GM12878 (cell line): ENCODE measurements at regions of chrX and their contacts with region 1.

Region 1: DNA sequence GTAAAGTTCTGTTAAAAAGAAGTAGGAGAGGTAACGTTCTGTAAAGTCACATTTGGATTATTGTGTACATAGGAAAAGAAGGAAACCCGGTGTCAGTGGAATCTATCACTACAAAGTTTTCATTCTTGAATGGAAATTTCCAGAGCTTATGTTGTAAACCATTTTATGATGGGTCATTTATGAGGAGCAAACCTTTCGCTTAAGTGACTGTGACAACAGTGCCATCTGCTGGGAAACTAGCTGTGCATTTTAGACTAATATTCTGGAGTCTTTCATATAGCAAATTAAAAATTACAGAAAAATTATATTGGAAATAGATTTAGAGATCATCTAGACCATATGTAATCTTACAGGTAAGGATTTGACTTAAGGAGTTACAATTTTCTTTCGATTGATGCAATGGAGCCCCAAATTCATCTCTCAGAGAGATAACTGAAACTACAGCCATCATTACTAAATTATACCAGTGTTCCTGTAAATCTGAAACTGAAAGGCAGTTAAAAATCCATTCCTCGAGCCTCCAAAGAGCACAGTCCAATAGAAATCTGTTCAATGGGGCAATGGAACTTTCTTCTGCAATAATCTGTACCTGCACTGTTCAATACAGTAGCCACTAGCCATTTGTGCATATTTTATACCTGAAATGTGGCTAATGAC is 26.9 kb downstream of the ASB9 start:
- DNase-seq: peak; percentile 17
- ATAC-seq: peak; percentile 85
- H3K4me3 ChIP-seq: no peak overlapping the region
- H3K27ac ChIP-seq: no peak overlapping the region
- H3K4me1 ChIP-seq: no peaks in the 10 kb centered on the region
- H3K27me3 ChIP-seq: no peaks in the 10 kb centered on the region
- CTCF ChIP-seq: peak; percentile 56 to 65 (median 64)
- EP300 ChIP-seq: no peak
- POLR2A ChIP-seq: no peak
- RAD21 ChIP-seq: peak; percentile 85

Region 2: GRCh38 chrX:14039344-14039743 is 1203.7 kb before region 1 on chrX:
- CTCF ChIA-PET with region 1: interaction called, 6 read pairs
- POLR2A ChIA-PET with region 1: no interaction called
- RAD21 ChIA-PET with region 1: interaction called, 3 read pairs
- SMC1A ChIA-PET with region 1: interaction called, 3 read pairs
- in situ Hi-C with region 1: loop called (anchors 10 kb)
- intact Hi-C with region 1: loop called (anchors 2 kb)
- DNase-seq: no peak
- ATAC-seq: peak; percentile 95
- H3K4me3 ChIP-seq: no peak overlapping the region
- H3K27ac ChIP-seq: no peak overlapping the region
- H3K4me1 ChIP-seq: no peaks in the 10 kb centered on the region
- H3K27me3 ChIP-seq: peaks cover 0 to 2% of the 10 kb centered on the region in 2 experiments; a peak in 1 of 4 replicates
- CTCF ChIP-seq: peak; percentile 48 to 81 (median 61); a peak in 5 of 6 replicates
- EP300 ChIP-seq: peak in 1 of 2 experiments; percentile 99; a peak in 2 of 4 replicates
- POLR2A ChIP-seq: no peak
- RAD21 ChIP-seq: peak; percentile 88

Region 3: GRCh38 chrX:14095702-14096101 is 1147.3 kb before region 1 on chrX:
- CTCF ChIA-PET with region 1: interaction called, 4 read pairs
- POLR2A ChIA-PET with region 1: no interaction called
- RAD21 ChIA-PET with region 1: interaction called, 3 read pairs
- SMC1A ChIA-PET with region 1: interaction called, 5 read pairs
- in situ Hi-C with region 1: no loop called
- intact Hi-C with region 1: loop called (anchors 1 kb)
- DNase-seq: peak; percentile 4
- ATAC-seq: peak; percentile 97
- H3K4me3 ChIP-seq: no peak overlapping the region
- H3K27ac ChIP-seq: no peak overlapping the region
- H3K4me1 ChIP-seq: no peaks in the 10 kb centered on the region
- H3K27me3 ChIP-seq: no peaks in the 10 kb centered on the region; a peak in 1 of 4 replicates
- CTCF ChIP-seq: peak; percentile 72 to 80 (median 76)
- EP300 ChIP-seq: no peak
- POLR2A ChIP-seq: no peak
- RAD21 ChIP-seq: peak; percentile 77

Region 4: DNA sequence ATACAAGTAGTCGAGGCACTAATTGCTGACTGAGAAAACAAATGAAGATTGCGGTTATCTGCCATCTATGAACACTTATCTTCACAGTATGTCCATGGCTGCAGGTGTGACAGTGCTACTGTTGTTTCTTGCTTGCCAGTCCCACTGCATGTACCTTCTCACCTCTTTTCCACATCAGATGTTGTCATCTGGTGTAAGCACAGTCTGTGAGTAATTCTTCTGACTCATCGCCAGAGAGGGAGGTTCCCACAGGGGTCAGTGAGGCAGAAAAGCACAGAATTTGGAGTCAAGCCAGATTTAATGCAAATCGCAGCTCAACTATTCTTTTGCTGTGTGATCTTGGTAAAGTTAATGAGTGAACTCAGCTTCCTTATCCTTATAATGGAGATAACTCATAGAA is 569.3 kb before region 1 on chrX:
- CTCF ChIA-PET with region 1: no interaction called
- POLR2A ChIA-PET with region 1: no interaction called
- RAD21 ChIA-PET with region 1: interaction called, 3 read pairs
- SMC1A ChIA-PET with region 1: interaction called, 3 read pairs
- in situ Hi-C with region 1: no loop called
- intact Hi-C with region 1: loop called (anchors 10 kb)
- DNase-seq: peak; percentile 70
- ATAC-seq: peak; percentile 96
- H3K4me3 ChIP-seq: no peak overlapping the region
- H3K27ac ChIP-seq: no peak overlapping the region
- H3K4me1 ChIP-seq: peaks cover 12% of the 10 kb centered on the region
- H3K27me3 ChIP-seq: no peaks in the 10 kb centered on the region
- CTCF ChIP-seq: no peak
- EP300 ChIP-seq: peak; percentile 31 to 46; a peak in 1 of 4 replicates
- POLR2A ChIP-seq: no peak
- RAD21 ChIP-seq: no peak

Region 5: DNA sequence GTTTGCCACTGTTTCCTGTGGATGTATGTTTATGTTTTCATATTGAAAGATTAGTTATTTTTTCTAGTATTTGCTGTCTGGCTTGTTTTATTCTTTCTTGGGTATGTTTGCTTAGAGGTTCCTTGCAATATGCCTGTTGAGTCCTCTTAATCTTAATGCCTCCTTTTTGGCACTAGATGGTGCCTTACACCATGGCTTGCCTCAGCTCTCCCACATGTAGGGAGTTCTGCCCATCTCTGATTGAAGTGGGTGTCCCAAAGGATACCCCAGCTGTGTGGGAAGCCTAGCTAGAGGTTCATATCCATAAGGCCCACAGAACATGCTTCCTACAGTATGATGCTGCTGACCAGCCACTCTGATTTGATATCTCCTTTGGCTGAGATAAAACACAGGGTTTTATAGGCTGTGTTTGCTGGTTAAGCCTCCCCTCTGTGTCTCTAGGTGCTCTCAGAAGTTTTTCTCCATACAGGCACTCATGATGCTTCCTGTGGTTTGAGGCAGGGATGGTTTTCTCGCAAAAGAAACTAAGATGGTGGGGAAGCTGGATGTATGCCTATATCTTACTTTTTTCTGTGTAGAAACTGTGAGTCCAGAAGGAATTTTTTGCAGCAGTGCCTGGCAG is 135.5 kb before region 1 on chrX:
- CTCF ChIA-PET with region 1: interaction called, 12 read pairs
- POLR2A ChIA-PET with region 1: no interaction called
- RAD21 ChIA-PET with region 1: interaction called, 7 read pairs
- SMC1A ChIA-PET with region 1: interaction called, 22 read pairs
- in situ Hi-C with region 1: no loop called
- intact Hi-C with region 1: loop called (anchors 1 kb)
- DNase-seq: no peak
- ATAC-seq: peak; percentile 78
- H3K4me3 ChIP-seq: no peak overlapping the region
- H3K27ac ChIP-seq: no peak overlapping the region
- H3K4me1 ChIP-seq: no peaks in the 10 kb centered on the region
- H3K27me3 ChIP-seq: no peaks in the 10 kb centered on the region
- CTCF ChIP-seq: peak; percentile 23 to 35 (median 30); a peak in 3 of 6 replicates
- EP300 ChIP-seq: no peak
- POLR2A ChIP-seq: no peak
- RAD21 ChIP-seq: peak; percentile 49

Region 6: DNA sequence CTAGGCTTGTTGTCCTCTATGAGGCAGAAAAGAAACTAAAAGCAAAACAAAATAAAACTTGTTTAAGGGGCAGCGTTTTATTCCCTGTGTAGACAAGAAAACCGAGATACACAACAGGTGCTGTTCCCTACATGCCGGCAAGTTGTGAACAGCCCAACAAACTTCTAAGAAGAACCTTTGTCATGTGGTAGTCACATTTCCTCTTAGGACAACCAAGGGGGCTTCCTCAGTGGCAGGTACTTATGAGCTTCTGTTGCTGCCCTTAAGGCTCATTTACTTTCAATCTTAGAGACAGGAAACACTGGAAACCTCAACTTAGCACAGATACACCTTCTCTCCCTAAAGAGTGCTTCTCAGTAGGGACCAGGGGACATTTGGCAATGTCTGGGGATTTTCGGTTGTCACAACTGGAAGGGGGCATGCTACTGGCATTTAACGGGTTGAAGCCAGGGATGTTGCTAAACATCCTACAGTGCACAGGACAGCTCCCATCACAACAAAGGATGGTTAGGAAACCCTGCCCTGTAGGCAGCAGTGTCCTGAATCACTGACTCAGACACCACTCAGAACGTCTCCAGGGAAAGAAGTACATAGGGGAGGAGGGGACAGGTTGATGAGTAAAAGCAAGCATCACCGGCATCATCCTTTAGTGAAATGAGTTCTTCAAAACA is 84.2 kb before region 1 on chrX:
- CTCF ChIA-PET with region 1: interaction called, 3 read pairs
- POLR2A ChIA-PET with region 1: no interaction called
- RAD21 ChIA-PET with region 1: interaction called, 4 read pairs
- SMC1A ChIA-PET with region 1: interaction called, 5 read pairs
- in situ Hi-C with region 1: no loop called
- intact Hi-C with region 1: loop called (anchors 5 kb)
- DNase-seq: peak; percentile 33
- ATAC-seq: peak; percentile 75
- H3K4me3 ChIP-seq: peak overlapping the region; percentile 29
- H3K27ac ChIP-seq: peak overlapping the region; percentile 48; the same call in 1 of the 2 replicates
- H3K4me1 ChIP-seq: no peaks in the 10 kb centered on the region
- H3K27me3 ChIP-seq: no peaks in the 10 kb centered on the region
- CTCF ChIP-seq: no peak
- EP300 ChIP-seq: 0 out of 4 replicates have a peak, but pooled peaks of 1 of the 2 experiments have one; percentile 11
- POLR2A ChIP-seq: no peak
- RAD21 ChIP-seq: no peak

Region 7: GRCh38 chrX:15202454-15203143 is 40.4 kb before region 1 on chrX:
- CTCF ChIA-PET with region 1: interaction called, 15 read pairs
- POLR2A ChIA-PET with region 1: no interaction called
- RAD21 ChIA-PET with region 1: interaction called, 12 read pairs
- SMC1A ChIA-PET with region 1: interaction called, 16 read pairs
- in situ Hi-C with region 1: no loop called
- intact Hi-C with region 1: no loop called
- DNase-seq: peak; percentile 15
- ATAC-seq: peak; percentile 69
- H3K4me3 ChIP-seq: no peak overlapping the region
- H3K27ac ChIP-seq: no peak overlapping the region
- H3K4me1 ChIP-seq: 0 out of 2 replicates have a peak, but pooled peaks cover 5% of the 10 kb centered on the region
- H3K27me3 ChIP-seq: no peaks in the 10 kb centered on the region
- CTCF ChIP-seq: no peak
- EP300 ChIP-seq: peak in 1 of 2 experiments; percentile 69; a peak in 3 of 4 replicates
- POLR2A ChIP-seq: no peak
- RAD21 ChIP-seq: no peak

Region 8: DNA sequence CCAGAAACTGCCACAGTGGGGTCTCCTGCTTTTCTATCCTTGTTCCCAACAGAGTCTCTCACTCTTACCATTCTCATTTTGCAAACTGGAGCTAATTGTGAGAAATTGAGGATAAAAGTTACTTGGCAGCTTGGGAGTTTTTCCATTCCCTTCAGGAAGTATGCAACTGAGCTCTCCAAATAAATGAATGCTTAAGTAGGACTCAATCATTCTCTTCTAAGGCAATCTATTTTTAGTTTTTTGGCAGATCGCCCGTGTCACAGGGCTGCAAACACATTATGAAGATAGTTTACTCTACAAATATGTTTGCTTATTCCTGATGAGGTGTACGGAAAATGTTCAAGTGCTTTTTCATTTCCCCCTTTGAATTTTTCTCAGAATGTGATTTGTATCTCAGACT is 67.1 kb after region 1 on chrX:
- CTCF ChIA-PET with region 1: no interaction called
- POLR2A ChIA-PET with region 1: no interaction called
- RAD21 ChIA-PET with region 1: no interaction called
- SMC1A ChIA-PET with region 1: no interaction called
- in situ Hi-C with region 1: no loop called
- intact Hi-C with region 1: no loop called
- DNase-seq: no peak
- ATAC-seq: no peak
- H3K4me3 ChIP-seq: no peak overlapping the region
- H3K27ac ChIP-seq: no peak overlapping the region
- H3K4me1 ChIP-seq: no peaks in the 10 kb centered on the region
- H3K27me3 ChIP-seq: no peaks in the 10 kb centered on the region; a peak in 2 of 4 replicates
- CTCF ChIP-seq: no peak
- EP300 ChIP-seq: no peak
- POLR2A ChIP-seq: no peak
- RAD21 ChIP-seq: no peak

Region 9: GRCh38 chrX:15838017-15838416 is 595.0 kb after region 1 on chrX:
- CTCF ChIA-PET with region 1: no interaction called
- POLR2A ChIA-PET with region 1: no interaction called
- RAD21 ChIA-PET with region 1: no interaction called
- SMC1A ChIA-PET with region 1: no interaction called
- in situ Hi-C with region 1: no loop called
- intact Hi-C with region 1: no loop called
- DNase-seq: no peak
- ATAC-seq: peak; percentile 88
- H3K4me3 ChIP-seq: no peak overlapping the region
- H3K27ac ChIP-seq: no peak overlapping the region
- H3K4me1 ChIP-seq: no peaks in the 10 kb centered on the region
- H3K27me3 ChIP-seq: no peaks in the 10 kb centered on the region
- CTCF ChIP-seq: peak in 2 of 3 experiments; percentile 26 to 47; a peak in 3 of 6 replicates
- EP300 ChIP-seq: no peak
- POLR2A ChIP-seq: no peak
- RAD21 ChIP-seq: 0 out of 2 replicates have a peak, but pooled peaks have one; percentile 3

Region 10: DNA sequence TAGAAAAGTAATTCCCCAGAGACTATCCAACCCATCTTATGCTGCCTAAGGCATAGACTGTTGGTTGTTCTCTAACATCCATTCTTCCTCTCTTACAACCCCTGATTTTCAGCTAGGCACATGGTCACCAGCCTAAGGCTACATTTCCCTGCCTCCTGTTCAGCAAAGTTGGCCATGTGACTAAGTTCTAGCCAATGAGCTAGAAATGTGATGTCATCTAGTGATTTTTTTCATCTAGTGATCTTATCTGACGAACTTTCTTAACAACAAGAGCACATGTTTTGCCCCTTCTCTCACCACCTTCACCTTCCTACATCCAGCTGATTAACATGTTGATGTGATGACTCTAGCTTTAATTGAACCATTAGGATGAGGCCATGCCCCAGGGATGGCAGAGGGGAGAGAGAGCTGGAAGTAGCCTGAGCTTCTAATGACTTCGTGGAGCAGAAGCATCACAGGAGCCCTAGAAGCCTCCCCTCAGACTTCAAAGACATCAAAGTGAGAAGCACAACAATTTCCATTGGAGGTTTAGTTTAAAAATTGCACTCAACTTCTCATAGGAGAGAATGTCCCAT is 1304.8 kb after region 1 on chrX:
- CTCF ChIA-PET with region 1: no interaction called
- POLR2A ChIA-PET with region 1: no interaction called
- RAD21 ChIA-PET with region 1: no interaction called
- SMC1A ChIA-PET with region 1: no interaction called
- in situ Hi-C with region 1: no loop called
- intact Hi-C with region 1: no loop called
- DNase-seq: no peak
- ATAC-seq: no peak
- H3K4me3 ChIP-seq: no peak overlapping the region
- H3K27ac ChIP-seq: no peak overlapping the region
- H3K4me1 ChIP-seq: no peaks in the 10 kb centered on the region
- H3K27me3 ChIP-seq: no peaks in the 10 kb centered on the region
- CTCF ChIP-seq: no peak
- EP300 ChIP-seq: no peak
- POLR2A ChIP-seq: no peak
- RAD21 ChIP-seq: no peak